Ovary (tissue), 10 donors: ENCODE measurements at regions of chr13 and their contacts with region 1.

Region 1: DNA sequence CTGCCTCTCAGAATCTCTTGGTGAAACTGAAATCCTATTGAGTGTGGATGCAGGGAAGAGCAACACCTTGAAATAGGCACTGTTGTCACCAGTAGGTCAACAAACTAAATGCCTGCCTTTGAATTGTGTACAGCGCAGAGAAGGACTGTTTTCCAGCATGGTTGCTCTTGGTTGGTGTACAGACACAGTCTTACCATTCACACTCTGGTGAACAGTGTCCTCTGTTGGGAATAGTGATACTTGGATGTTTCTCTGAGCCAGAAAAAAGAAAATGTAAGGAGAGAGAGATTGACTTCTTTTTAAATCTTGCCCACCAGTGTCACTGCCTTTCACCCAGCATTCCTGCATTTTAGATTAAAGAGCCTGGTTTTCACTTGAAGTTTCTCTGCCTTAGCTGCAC is 179.7 kb downstream of the STK24 start:
- DNase-seq: no peak
- H3K4me3 ChIP-seq: no peak overlapping the region
- H3K27ac ChIP-seq: no peak overlapping the region
- H3K4me1 ChIP-seq: no peaks in the 10 kb centered on the region
- H3K27me3 ChIP-seq: no peaks in the 10 kb centered on the region
- CTCF ChIP-seq: peak in 1 of 3 donors; percentile 35
- EP300 ChIP-seq: no peak
- POLR2A ChIP-seq: no peak

Region 2: DNA sequence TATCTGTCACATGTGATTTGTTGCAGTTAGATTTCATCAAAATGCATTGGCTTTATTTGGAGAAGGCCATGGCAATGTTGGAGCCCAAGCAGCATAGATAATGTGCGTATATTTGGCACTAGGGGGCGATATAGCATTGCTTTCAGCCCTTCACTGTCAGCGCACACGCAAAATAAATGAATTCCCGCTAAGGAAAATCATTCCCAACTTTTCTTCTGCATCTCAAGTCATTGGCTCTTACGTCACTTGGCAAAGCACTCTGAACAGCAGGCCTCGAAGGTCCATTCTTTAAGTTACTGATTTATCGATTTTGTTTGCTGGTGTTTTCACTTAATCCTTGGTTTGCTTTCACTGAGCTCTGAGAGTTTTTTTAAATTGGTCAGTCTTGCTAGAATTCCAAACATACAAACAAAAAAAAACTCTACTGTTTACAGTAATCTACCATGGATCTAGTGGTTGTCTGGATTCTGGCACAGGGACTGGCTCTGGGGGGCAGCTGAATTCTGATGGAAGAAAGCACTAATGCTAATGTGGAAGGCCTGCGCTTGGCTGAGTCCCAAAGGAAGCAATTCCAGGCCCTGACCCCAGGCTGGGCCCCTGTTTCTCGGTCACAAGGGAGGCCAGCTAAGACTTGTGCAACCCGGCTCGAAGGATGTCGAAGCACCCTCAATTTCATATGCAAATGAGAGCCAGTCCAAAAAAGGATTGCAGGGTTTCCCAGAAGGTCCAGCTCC is 541.5 kb before region 1 on chr13:
- intact Hi-C with region 1: loop called in 1 of 4 experiments (anchors 10 kb)
- DNase-seq: peak; percentile 21 to 48 (median 41)
- H3K4me3 ChIP-seq: no peak overlapping the region
- H3K27ac ChIP-seq: no peak overlapping the region
- H3K4me1 ChIP-seq: peaks cover 3% of the 10 kb centered on the region
- H3K27me3 ChIP-seq: no peaks in the 10 kb centered on the region
- CTCF ChIP-seq: peak; percentile 47 to 68 (median 50)
- EP300 ChIP-seq: no peak
- POLR2A ChIP-seq: no peak

Region 3: GRCh38 chr13:98022210-98022609 is 375.0 kb before region 1 on chr13:
- intact Hi-C with region 1: loop called in 1 of 4 experiments (anchors 10 kb)
- DNase-seq: no peak
- H3K4me3 ChIP-seq: no peak overlapping the region
- H3K27ac ChIP-seq: no peak overlapping the region
- H3K4me1 ChIP-seq: peaks cover 4% of the 10 kb centered on the region
- H3K27me3 ChIP-seq: no peaks in the 10 kb centered on the region
- CTCF ChIP-seq: no peak
- EP300 ChIP-seq: no peak
- POLR2A ChIP-seq: no peak

Region 4: DNA sequence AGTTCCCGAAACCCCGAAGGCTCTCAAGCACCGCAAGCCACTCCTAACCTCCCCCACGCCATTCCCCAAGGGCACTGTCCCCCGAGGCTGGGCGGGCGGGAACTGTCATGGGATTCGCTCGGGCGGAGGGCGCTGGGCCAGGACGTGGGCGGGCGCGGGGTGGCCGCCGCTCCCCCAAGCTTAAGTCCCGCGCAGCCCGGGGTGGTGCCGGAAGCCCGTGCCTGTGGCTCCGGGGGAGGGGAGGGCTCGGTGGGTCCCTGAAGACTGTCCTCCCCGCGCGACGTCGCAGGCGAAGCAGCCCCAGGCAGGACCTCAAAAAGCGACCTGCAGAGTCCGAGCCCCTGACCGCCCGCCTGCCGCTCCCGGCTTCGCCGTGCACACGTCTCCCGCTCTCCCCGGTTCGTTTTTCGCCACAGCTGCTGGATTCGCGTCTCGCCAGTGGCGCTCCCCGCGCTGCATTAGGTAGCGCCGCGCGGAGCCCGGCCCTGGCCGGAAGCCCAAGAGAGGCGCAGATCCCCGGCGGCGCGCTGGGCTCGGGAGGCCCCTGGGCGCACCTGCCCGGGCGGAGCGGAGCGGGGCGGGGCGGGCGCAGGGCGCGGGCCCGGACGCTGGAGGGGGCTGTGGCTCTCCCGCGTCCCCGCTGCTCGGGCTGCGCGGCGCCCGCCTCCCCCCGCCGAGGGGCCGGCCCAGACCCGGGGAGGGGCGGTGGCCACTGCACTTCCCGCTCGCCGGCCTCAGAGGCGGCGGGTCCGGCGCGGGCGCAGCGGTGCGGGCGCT is 254.7 kb before region 1 on chr13 and contains the start of gene FARP1:
- intact Hi-C with region 1: loop called in 2 of 4 experiments (anchors 5 to 10 kb)
- DNase-seq: peak; percentile 69 to 85 (median 77)
- H3K4me3 ChIP-seq: peak within 1 kb of the TSS; percentile 38
- H3K27ac ChIP-seq: peak within 1 kb of the TSS in 1 of 2 donors; percentile 2
- H3K4me1 ChIP-seq: peaks cover 1% of the 10 kb centered on the region
- H3K27me3 ChIP-seq: no peaks in the 10 kb centered on the region
- CTCF ChIP-seq: peak in 2 of 3 donors; percentile 60 to 65
- EP300 ChIP-seq: no peak
- POLR2A ChIP-seq: no peak
- total RNA-seq, gene FARP1: 21.9 to 90.1 (median 35.6) TPM

Region 5: DNA sequence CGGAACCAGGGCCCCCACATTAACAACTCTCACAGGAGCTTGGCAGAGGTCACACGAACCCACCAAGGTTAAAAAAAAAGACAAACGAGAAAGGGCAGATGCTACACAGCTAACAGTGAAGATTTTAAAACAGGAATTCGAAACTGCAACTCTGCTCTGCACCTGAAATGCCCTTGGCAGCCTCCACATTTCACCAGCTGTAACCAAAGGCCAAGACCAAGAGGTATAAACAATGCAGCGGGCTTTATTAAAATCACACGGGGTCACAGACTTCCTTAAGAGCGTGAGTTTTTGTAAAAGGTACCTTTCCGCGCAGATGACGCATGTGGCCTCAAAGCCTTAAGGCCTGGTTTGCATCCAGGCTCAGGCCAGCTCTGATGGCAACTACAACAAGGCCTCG is 91.5 kb after region 1 on chr13:
- intact Hi-C with region 1: no loop called
- DNase-seq: no peak
- H3K4me3 ChIP-seq: no peak overlapping the region
- H3K27ac ChIP-seq: no peak overlapping the region
- H3K4me1 ChIP-seq: peaks cover 17% of the 10 kb centered on the region
- H3K27me3 ChIP-seq: no peaks in the 10 kb centered on the region
- CTCF ChIP-seq: no peak
- EP300 ChIP-seq: no peak
- POLR2A ChIP-seq: no peak